ENCODE measurements at regions of chr17 and their contacts with region 1.

Region 1: DNA sequence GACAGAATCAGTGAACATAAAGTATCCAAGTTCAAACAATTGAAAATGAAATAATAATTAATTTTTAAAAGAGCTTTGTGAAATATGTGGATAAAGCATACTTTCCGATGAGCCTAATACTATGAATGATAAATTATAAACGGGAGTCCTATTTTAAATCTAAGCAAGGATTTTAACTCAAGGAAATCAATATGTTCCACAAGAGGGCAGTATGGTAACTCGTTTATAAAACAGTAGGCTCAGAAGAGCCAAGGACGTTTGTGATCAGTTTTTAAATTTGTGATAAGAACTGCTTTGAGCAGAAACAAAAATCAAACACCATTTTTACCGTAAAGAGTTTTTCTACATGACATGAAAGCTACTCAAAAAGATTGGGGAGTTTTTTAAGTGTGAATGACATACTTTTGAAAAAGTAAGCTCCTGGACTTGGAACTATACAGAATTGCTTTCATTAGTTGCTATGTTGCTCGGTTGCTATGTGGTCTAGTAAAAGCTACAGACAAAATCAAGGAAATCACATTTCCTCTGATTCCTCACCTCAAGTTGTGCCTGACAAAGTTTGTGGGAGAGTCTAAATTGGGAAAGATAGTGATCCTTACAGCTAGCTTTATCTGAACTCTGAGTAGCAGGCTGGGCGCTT is 11.8 kb upstream of the TEKT1 start:
- DNase-seq: no peak
- ATAC-seq: peak; percentile 58
- H3K4me3 Mint-ChIP-seq: no peak overlapping the region
- H3K27ac Mint-ChIP-seq: no peak overlapping the region
- H3K4me1 Mint-ChIP-seq: peaks cover 13% of the 10 kb centered on the region
- H3K27me3 Mint-ChIP-seq: peaks cover 78% of the 10 kb centered on the region

Region 2: GRCh38 chr17:6487251-6488007 is 355.9 kb before region 1 on chr17:
- CTCF ChIA-PET with region 1: no interaction called
- DNase-seq: no peak
- ATAC-seq: no peak
- H3K4me3 Mint-ChIP-seq: no peak overlapping the region
- H3K27ac Mint-ChIP-seq: no peak overlapping the region
- H3K4me1 Mint-ChIP-seq: no peaks in the 10 kb centered on the region
- H3K27me3 Mint-ChIP-seq: no peaks in the 10 kb centered on the region

Region 3: GRCh38 chr17:6666077-6666521 is 177.3 kb before region 1 on chr17:
- CTCF ChIA-PET with region 1: interaction called, 12 read pairs
- DNase-seq: peak; percentile 65
- ATAC-seq: peak; percentile 76
- H3K4me3 Mint-ChIP-seq: no peak overlapping the region
- H3K27ac Mint-ChIP-seq: no peak overlapping the region
- H3K4me1 Mint-ChIP-seq: peaks cover 12% of the 10 kb centered on the region
- H3K27me3 Mint-ChIP-seq: peaks cover 37% of the 10 kb centered on the region

Region 4: GRCh38 chr17:6831661-6832263 is 11.6 kb before region 1 on chr17 and contains the start of gene TEKT1:
- CTCF ChIA-PET with region 1: interaction called, 18 read pairs
- DNase-seq: peak; percentile 82
- ATAC-seq: peak; percentile 91
- H3K4me3 Mint-ChIP-seq: peak within 1 kb of the TSS; percentile 56
- H3K27ac Mint-ChIP-seq: no peak within 1 kb of the TSS
- H3K4me1 Mint-ChIP-seq: peaks cover 5% of the 10 kb centered on the region
- H3K27me3 Mint-ChIP-seq: peaks cover 68% of the 10 kb centered on the region
- total RNA-seq, gene TEKT1: not detected

Region 5: DNA sequence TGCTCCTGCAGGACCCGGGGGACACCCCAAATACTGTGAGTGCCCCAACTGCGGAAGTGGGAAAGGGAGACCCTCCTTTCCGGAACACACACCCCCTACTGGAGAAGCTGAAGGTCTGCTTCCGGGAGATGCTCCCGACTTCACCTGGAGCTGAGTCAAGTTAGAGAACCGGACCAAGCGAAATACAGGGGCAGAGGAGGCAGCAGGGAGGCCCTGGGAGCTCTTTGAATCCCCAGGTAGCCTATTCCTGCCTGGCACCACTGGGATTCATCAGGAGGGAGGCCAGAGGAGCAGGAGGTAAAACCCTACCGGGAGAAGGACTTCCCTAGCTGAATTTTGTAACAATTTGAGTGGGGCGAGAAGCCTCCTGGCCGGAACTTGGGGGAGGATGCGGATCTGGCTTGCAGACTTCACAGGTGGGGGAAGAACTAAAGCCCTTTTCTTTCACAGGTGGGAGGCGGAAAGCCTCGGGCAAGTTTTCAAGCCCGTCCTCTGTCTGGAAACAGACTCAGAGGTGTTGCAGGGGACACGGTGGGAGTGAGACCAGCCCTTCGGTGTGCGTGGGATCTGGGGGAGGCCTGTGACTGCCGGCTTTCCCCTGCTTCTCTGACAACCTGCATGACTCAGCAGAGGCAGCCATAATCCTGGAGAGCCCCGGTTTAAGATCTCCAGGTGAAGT is 10.5 kb after region 1 on chr17:
- CTCF ChIA-PET with region 1: interaction called, 15 read pairs
- DNase-seq: peak; percentile 42
- ATAC-seq: peak; percentile 33
- H3K4me3 Mint-ChIP-seq: peak overlapping the region; percentile 68
- H3K27ac Mint-ChIP-seq: peak overlapping the region; percentile 21
- H3K4me1 Mint-ChIP-seq: peaks cover 11% of the 10 kb centered on the region
- H3K27me3 Mint-ChIP-seq: peaks cover 32% of the 10 kb centered on the region

Region 6: GRCh38 chr17:6913608-6914443 is 70.5 kb after region 1 on chr17:
- CTCF ChIA-PET with region 1: interaction called, 19 read pairs
- DNase-seq: peak; percentile 88
- ATAC-seq: peak; percentile 86
- H3K4me3 Mint-ChIP-seq: peak overlapping the region; percentile 72
- H3K27ac Mint-ChIP-seq: peak overlapping the region; percentile 54
- H3K4me1 Mint-ChIP-seq: peaks cover 23% of the 10 kb centered on the region
- H3K27me3 Mint-ChIP-seq: peaks cover 16% of the 10 kb centered on the region

Region 7: DNA sequence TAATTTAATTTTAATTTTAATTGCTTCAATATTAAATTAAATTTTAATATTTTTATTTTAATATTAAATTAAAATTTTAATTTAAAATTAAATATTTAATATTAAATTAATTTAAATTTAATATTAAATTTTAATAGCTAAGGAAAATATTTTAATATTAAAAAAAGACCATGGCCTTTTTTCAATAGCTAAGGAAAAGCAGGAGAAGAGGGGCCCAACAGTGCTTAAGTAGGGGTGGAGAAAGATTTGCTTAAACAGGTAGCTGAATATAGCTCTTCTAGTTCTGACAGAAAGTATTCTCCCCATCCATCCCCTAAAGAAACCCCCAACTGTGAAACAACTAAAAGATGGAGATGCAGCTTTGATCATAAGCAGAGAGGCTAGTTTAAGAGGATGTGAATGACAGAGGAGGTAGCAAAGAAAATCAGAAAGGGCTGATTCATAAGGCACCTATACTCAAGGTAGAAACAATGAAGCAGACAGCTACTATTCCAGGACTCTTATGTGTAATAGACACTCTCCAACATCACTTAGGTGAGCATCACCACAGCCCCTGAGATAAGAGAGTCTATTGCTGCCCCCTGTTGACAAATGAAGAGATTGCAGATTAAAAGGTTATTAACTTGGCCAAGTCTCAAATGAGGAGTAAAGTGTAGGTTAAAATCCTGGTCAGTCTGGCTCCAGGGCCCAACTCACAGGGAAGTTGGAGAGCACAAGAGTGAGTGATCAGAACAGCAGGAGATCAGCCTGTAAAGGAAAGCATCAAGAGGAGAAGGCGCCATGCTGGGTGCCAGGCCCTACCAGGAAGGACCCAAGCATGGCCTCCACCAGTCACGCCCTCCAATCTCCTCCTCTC is 161.3 kb after region 1 on chr17:
- CTCF ChIA-PET with region 1: interaction called, 29 read pairs
- DNase-seq: no peak
- ATAC-seq: peak; percentile 95
- H3K4me3 Mint-ChIP-seq: no peak overlapping the region
- H3K27ac Mint-ChIP-seq: peak overlapping the region; percentile 40
- H3K4me1 Mint-ChIP-seq: peaks cover 20% of the 10 kb centered on the region
- H3K27me3 Mint-ChIP-seq: no peaks in the 10 kb centered on the region